ENCODE measurements at regions of chr2 and their contacts with region 1.

Region 1: GRCh38 chr2:18149645-18150246 is 271.3 kb downstream of the KCNS3 start:
- DNase-seq: peak; percentile 57
- H3K4me3 ChIP-seq: no peak overlapping the region
- H3K27ac ChIP-seq: no peak overlapping the region
- H3K4me1 ChIP-seq: no peaks in the 10 kb centered on the region
- H3K27me3 ChIP-seq: no peaks in the 10 kb centered on the region
- CTCF ChIP-seq: peak; percentile 80
- EP300 ChIP-seq: no peak
- RAD21 ChIP-seq: peak; percentile 85

Region 2: DNA sequence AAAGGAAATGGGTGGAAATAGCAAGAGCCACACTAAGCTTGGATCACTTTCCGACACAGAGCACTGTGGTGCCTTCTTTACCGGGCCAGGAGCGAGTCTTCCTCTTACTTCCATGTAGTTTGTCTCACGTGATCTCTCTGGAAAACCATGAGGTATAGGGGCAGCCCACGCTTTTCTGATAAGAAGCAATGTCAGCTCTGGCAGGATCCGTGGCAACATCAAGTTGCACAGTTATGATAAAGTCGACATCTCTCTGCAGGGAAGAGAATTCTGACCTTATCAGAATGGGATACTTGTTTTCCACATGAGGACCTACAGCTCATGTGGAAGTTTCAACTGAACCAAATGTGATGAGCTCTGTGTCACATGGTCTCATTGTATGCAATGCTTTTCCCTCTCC is 303.9 kb before region 1 on chr2:
- CTCF ChIA-PET with region 1: interaction called, 90 read pairs
- POLR2A ChIA-PET with region 1: no interaction called
- DNase-seq: no peak
- H3K4me3 ChIP-seq: no peak overlapping the region
- H3K27ac ChIP-seq: no peak overlapping the region
- H3K4me1 ChIP-seq: no peaks in the 10 kb centered on the region
- H3K27me3 ChIP-seq: no peaks in the 10 kb centered on the region; the same call in 1 of the 2 replicates
- CTCF ChIP-seq: no peak
- EP300 ChIP-seq: no peak
- RAD21 ChIP-seq: no peak

Region 3: DNA sequence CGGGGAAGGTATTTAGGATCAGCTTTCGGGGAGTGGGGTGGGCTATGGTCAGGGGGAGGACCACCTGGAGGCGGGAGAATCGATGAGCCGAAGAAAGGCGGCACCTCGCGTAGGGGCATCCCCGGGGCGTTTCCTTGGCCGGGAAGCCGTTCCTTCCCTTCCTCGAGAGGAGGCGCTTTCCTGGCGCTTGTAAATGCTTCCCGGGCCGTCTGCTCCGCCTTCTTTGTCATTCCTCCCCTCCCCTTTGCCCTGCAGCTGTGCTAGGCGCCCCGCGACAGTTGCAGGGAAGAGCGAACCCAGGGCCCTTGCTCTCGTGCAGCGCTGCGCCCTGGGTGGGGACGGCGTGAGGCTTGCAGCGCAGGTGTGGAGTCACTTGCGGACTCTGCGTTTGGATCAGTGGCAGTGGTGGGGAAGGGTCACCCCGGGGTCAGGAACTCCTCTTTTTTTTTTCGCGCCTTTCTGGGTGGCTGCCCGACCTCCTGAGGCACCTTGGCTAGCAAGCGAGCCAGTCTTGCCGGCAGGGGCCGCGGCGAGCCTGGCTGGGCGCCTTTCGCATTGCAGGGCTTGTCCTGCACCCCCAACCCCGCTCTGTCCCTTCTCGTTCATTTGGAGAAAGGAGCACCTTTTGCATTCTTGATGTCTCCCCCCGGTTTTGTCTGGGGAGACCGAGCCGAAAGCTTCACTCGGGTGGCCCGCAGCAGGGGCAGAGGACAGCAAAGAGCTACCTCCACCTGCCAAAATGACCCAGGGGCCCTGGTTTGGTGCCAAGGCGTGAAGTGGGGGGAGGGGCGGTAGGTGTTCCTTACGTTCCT is 270.4 kb before region 1 on chr2:
- CTCF ChIA-PET with region 1: interaction called, 12 read pairs
- POLR2A ChIA-PET with region 1: no interaction called
- DNase-seq: peak; percentile 72
- H3K4me3 ChIP-seq: peak overlapping the region; percentile 42 to 48; a peak in 3 of 4 replicates
- H3K27ac ChIP-seq: no peak overlapping the region
- H3K4me1 ChIP-seq: peaks cover 4 to 13% of the 10 kb centered on the region in 2 experiments; a peak in 2 of 4 replicates
- H3K27me3 ChIP-seq: peaks cover 68% of the 10 kb centered on the region
- CTCF ChIP-seq: no peak; the same call in 1 of the 2 replicates
- EP300 ChIP-seq: no peak
- RAD21 ChIP-seq: no peak

Region 4: DNA sequence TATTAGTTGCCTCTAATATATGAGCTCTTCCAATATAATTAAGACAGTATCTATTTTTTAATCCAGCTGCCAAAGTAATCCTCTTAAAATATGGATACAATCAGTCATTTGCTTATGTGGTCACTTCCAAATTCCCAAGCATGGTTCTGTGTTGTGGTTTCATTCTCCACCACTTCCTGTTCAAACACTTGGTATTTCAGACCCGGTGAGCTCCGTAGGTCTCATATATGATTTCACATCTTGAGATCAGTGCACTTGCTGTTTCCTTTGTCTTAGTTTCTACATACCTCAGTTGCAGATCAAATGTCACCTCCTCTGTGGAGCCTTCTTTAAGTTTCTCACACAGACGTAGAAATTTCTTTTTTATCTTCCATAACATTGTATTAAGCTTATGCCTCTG is 17.0 kb before region 1 on chr2:
- CTCF ChIA-PET with region 1: interaction called, 77 read pairs
- POLR2A ChIA-PET with region 1: no interaction called
- DNase-seq: no peak
- H3K4me3 ChIP-seq: no peak overlapping the region
- H3K27ac ChIP-seq: no peak overlapping the region
- H3K4me1 ChIP-seq: no peaks in the 10 kb centered on the region; a peak in 1 of 4 replicates
- H3K27me3 ChIP-seq: no peaks in the 10 kb centered on the region
- CTCF ChIP-seq: no peak
- EP300 ChIP-seq: no peak
- RAD21 ChIP-seq: no peak

Region 5: DNA sequence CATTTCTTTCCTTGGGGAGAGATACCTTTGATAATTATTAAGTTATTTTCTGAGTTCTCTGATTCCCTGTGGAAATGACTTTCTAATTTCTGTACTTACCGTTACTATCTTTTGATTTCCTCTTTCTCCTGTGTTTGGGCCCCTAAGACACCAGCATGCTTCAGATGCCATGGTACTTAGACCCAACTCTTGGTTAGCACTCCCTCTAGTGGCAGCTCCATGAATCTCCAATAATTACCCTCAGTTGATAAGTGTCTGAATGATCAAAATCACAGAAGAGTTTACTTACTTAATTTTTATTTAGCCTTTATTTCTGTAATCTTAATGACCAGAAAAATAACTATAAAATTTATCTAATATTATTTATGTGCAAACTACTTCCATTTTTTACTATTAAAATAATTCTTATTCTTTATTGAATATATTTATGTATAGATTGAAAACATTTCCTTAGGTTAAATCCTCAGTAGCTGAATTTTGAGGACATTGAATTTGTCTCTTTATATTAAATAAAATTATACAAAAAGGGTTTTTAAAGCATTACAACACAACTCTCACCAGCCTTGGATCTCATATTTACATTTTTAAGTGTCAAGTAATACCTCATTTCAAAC is 29.1 kb after region 1 on chr2:
- CTCF ChIA-PET with region 1: interaction called, 23 read pairs
- POLR2A ChIA-PET with region 1: no interaction called
- DNase-seq: peak; percentile 43
- H3K4me3 ChIP-seq: no peak overlapping the region; a peak in 1 of 4 replicates
- H3K27ac ChIP-seq: no peak overlapping the region
- H3K4me1 ChIP-seq: no peaks in the 10 kb centered on the region
- H3K27me3 ChIP-seq: peaks cover 7% of the 10 kb centered on the region; the same call in 1 of the 2 replicates
- CTCF ChIP-seq: peak; percentile 92
- EP300 ChIP-seq: no peak
- RAD21 ChIP-seq: peak; percentile 79

Region 6: DNA sequence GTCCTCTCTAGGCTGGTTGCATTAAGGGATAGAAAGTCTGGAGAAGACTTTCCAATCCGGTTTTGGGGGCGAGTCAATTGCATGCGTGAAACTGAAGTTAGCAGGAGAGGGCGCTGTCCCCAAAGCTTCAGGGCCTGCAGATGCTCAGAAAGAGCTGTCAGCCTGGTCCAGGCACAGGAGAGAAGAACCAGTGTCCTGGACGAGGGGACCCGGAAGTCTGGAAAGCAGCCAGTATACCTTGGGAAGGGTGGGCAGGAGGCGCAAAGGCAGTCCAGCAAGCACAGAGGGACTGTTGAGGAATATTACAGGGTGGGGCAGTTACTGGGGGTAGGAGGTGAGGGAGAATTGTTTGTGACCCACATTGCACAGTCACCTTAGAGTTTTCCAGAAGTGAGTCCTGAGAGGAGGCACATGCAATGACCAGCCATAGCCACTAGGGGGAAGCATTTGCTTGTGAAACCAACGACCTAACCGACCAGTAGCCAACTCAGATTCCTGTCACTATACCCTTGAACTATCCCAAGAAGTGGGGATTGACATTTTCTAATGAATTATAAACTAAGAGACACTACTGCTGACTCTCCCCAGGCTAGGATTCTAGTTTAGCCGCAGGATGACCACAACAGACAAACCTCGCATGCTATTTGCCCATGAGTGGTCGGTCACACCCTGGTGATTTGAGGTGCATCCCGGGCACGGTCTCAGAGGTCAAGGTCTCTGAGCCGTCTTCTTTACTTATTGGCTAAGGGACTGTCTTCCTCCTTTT is 237.9 kb after region 1 on chr2:
- CTCF ChIA-PET with region 1: no interaction called
- POLR2A ChIA-PET with region 1: no interaction called
- DNase-seq: peak; percentile 65
- H3K4me3 ChIP-seq: no peak overlapping the region; a peak in 1 of 4 replicates
- H3K27ac ChIP-seq: no peak overlapping the region
- H3K4me1 ChIP-seq: peaks cover 0 to 2% of the 10 kb centered on the region in 2 experiments; a peak in 2 of 4 replicates
- H3K27me3 ChIP-seq: peaks cover 2% of the 10 kb centered on the region; the same call in 1 of the 2 replicates
- CTCF ChIP-seq: peak; percentile 99
- EP300 ChIP-seq: no peak
- RAD21 ChIP-seq: peak; percentile 97